GM10248 (cell line): ENCODE measurements at regions of chr1 and their contacts with region 1.

Region 1: DNA sequence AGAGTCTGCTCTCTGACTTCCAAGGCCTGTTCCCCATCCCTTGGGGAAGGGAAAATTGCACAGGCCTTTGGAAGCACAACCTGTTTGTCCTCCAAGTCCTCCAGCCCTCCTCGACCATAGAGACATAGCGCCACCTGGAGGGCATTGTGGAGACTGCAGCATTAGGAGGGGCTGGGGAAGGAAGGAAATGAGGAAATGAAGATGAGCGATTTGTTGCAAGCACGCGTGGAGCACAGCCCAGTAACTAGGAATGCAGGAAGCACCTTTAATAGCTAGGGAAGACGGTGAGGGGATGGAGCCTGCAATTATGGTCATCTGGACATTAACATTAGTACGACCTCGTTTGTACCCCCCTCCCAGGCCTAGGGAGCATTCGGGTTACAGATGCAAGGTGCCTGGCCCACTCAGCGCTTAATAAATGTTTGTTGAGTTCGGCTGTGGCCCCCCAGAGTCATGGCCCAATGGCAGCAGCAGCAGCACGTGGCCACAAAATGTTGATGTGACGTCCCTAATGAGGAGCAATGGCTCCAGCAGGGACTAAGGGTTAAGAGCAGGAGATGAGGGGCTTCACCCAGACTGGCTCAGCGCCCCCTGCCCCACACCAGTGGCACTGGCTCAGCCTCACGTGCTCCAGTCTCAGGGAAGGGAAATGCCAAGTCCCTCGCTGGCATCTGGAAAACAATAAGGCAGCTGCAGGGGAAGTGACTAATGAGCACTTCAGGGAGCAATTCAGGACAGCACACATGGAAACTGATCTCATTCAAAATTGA is 8.0 kb upstream of the CAMK2N1 start:
- DNase-seq: peak; percentile 85
- CTCF ChIP-seq: peak; percentile 98

Region 2: GRCh38 chr1:20212685-20213331 is 281.2 kb before region 1 on chr1:
- CTCF ChIA-PET with region 1: interaction called, 116 read pairs
- POLR2A ChIA-PET with region 1: no interaction called
- DNase-seq: peak; percentile 73
- CTCF ChIP-seq: peak; percentile 47

Region 3: DNA sequence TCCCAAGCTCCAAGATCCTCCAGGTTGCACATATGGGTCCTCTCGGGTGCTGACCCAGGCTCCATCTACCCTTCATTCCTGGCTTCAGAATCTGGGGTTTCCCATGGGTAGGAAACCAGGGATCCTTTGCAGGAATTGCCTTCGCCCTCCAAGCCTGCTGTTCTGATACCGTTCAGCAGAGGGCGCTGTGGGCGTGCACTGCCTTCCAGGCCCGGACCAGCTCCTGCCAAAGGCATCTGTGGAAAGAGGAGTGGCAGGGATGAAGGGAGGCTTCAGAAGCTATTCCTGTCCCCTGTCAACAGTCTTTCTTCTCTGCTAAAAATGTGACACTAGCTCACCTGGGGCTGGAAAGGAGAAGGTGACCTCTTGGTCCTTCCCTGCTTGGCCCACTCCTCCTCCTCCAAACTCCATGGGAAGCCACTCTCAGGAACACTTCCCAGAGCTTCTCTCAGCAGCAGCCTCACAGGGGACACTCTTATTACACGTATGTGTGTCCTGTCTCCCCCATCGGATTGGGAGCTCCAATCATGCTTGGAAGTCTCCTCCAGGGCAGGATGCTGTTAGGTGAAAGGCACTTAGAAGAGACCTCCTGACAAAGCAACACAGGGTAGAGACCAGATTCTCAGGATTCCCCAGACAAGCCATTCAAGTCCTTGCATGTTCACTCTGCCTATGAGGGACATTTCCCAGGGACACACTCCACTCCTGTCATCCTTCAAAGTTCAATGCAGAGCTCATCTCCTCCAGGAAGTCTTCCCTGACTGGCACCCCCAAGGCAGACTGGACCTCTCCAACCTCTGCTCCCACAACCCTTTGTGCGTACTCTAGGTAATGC is 132.0 kb before region 1 on chr1:
- CTCF ChIA-PET with region 1: interaction called, 21 read pairs
- POLR2A ChIA-PET with region 1: no interaction called
- DNase-seq: peak; percentile 52
- CTCF ChIP-seq: peak; percentile 53

Region 4: GRCh38 chr1:20376880-20377494 is 117.0 kb before region 1 on chr1:
- CTCF ChIA-PET with region 1: interaction called, 20 read pairs
- POLR2A ChIA-PET with region 1: no interaction called
- DNase-seq: peak; percentile 76
- CTCF ChIP-seq: peak; percentile 73

Region 5: GRCh38 chr1:20483833-20484518 is 10.0 kb before region 1 on chr1:
- CTCF ChIA-PET with region 1: interaction called, 18 read pairs
- POLR2A ChIA-PET with region 1: no interaction called
- DNase-seq: no peak
- CTCF ChIP-seq: no peak

Region 6: DNA sequence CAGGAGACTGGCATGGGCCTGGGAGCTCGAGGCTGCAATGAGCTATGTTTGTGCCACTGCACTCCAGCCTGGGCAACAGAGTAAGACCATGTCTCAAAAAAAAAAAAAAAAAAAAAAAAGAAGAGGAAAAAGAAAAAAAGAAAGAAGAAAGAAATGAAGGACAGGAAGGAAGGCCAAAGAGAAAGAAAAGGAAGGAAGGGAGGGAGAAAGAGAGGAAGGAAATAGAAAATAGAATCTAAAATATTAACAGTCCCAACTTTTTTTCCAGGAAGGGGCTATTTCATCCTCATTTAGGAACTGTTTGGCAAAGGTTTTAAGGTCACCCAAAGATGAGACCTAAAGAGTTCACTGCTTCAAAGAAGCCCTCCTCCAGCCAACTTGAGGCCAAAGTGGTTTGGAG is 11.5 kb after region 1 on chr1:
- CTCF ChIA-PET with region 1: interaction called, 15 read pairs
- POLR2A ChIA-PET with region 1: no interaction called
- DNase-seq: no peak
- CTCF ChIP-seq: no peak